ENCODE measurements at regions of chr7 and their contacts with region 1.

Region 1: DNA sequence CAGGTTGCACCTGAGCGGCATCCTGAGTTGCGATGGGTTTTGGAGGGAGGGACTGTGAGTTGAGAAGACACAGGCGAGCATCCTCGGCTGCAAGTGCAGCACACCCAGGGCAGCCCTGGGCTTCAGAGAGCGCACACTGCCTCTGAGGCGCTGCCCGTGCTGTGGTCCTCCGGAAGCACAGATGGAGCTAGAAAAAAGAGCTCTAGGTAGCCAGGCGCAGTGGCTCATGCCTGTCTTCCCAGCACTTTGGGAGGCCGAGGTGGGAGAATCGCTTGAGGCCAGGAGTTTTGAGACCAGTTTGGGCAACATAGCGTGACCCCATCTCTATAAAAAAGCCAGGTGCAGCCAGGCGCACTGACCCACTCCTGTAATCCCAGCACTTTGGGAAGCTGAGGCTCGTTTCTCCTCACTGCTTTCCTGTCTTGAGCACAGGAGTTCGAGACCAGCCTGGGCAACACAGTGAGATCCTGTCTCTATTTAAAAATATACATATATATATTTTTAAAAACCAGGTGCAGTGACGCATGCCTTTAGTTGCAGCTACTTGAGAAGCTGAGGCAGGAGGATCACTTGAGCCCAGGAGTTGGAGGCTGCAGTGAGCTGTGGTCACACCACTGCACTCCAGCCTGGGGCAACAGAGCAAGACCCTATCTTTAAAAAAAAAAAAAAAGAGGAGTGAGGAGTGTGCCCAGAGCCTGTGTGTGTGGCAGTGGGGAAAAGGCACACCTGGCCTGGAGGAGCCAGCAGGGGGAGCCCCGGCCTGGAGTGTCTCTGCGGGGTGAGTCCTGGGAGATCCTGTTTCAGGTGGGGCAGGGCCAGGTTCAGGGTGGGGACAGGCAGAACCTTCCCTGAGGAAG is 9.3 kb upstream of the ARPC1B start:
- DNase-seq: peak; percentile 41
- H3K4me3 ChIP-seq: no peak overlapping the region
- H3K27ac ChIP-seq: no peak overlapping the region
- H3K4me1 ChIP-seq: no peaks in the 10 kb centered on the region
- H3K27me3 ChIP-seq: no peaks in the 10 kb centered on the region
- CTCF ChIP-seq: peak; percentile 54 to 81

Region 2: GRCh38 chr7:98360221-98361124 is 1004.7 kb before region 1 on chr7:
- CTCF ChIA-PET with region 1: no interaction called
- dilution Hi-C with region 1: no loop called
- in situ Hi-C with region 1: no loop called
- intact Hi-C with region 1: loop called (anchors 5 kb)
- DNase-seq: no peak
- H3K4me3 ChIP-seq: no peak overlapping the region
- H3K27ac ChIP-seq: no peak overlapping the region
- H3K4me1 ChIP-seq: peaks cover 3% of the 10 kb centered on the region
- H3K27me3 ChIP-seq: no peaks in the 10 kb centered on the region
- CTCF ChIP-seq: no peak

Region 3: DNA sequence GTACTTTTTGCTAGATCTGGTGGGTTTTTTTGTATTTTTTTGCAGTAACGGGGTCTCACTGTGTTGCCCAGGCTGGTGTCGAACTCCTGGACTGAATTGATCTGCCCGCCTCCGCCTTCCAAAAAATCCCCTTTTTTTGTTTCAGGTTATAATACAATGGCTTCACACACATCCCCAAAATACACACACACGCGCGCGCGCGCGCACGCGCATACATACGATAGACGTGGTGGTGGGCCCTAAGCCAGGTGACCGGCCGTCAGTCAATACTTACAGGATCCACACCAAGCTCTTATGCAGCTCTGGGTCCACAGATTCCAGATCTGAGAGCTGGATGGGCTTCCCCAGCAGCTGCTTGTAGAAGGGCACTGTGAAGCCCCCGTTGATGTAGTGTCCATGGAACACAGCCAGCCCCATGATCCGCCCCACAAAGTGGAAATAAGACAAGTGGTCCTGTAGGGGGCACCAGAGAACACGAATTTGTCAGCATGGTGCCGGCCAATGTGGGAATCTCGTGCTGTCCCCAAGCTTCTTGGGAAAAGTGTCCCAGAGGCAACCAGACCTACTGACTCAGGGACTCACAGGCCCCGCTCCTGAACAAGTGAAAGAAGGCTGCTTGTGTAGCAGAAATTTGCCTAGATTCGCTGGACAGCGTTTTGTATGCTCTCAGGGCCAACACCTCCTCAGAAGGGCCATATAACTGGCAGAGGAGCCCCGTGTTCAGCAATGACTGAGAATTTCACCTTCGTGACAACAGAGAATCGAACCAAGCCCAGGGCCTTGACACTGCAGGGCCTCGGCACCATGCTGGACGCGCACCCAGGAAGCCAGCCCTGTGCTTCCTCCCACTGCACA is 324.9 kb before region 1 on chr7:
- CTCF ChIA-PET with region 1: interaction called, 16 read pairs
- dilution Hi-C with region 1: no loop called
- in situ Hi-C with region 1: no loop called
- intact Hi-C with region 1: no loop called
- DNase-seq: peak; percentile 65
- H3K4me3 ChIP-seq: no peak overlapping the region
- H3K27ac ChIP-seq: no peak overlapping the region
- H3K4me1 ChIP-seq: no peaks in the 10 kb centered on the region
- H3K27me3 ChIP-seq: no peaks in the 10 kb centered on the region
- CTCF ChIP-seq: peak; percentile 51 to 65

Region 4: GRCh38 chr7:99386584-99387238 is 21.5 kb after region 1 on chr7:
- CTCF ChIA-PET with region 1: no interaction called
- dilution Hi-C with region 1: no loop called
- in situ Hi-C with region 1: no loop called
- intact Hi-C with region 1: loop called (anchors 1 kb)
- DNase-seq: no peak
- H3K4me3 ChIP-seq: no peak overlapping the region
- H3K27ac ChIP-seq: no peak overlapping the region
- H3K4me1 ChIP-seq: no peaks in the 10 kb centered on the region
- H3K27me3 ChIP-seq: no peaks in the 10 kb centered on the region
- CTCF ChIP-seq: peak in 1 of 2 donors; percentile 27

Measured in mammary epithelial cell (primary cell).